Colonic mucosa (tissue), 4 donors: ENCODE measurements at regions of chr7 and their contacts with region 1.

Region 1: GRCh38 chr7:17769918-17770317 is 170.4 kb downstream of the SNX13 start:
- DNase-seq: peak; percentile 70
- H3K4me3 ChIP-seq: no peak overlapping the region
- H3K27ac ChIP-seq: no peak overlapping the region
- H3K4me1 ChIP-seq: no peaks in the 10 kb centered on the region
- H3K27me3 ChIP-seq: no peaks in the 10 kb centered on the region
- CTCF ChIP-seq: peak; percentile 50

Region 2: GRCh38 chr7:17991866-17992648 is 222.1 kb after region 1 on chr7:
- intact Hi-C with region 1: loop called (anchors 5 kb)
- DNase-seq: peak; percentile 53
- H3K4me3 ChIP-seq: no peak overlapping the region
- H3K27ac ChIP-seq: no peak overlapping the region
- H3K4me1 ChIP-seq: peaks cover 2% of the 10 kb centered on the region
- H3K27me3 ChIP-seq: no peaks in the 10 kb centered on the region
- CTCF ChIP-seq: peak; percentile 21